Endothelial cell of umbilical vein (primary cell): ENCODE measurements at regions of chr3 and their contacts with region 1.

Region 1: GRCh38 chr3:155323063-155323666 is 29.7 kb upstream of the STRIT1 start:
- DNase-seq: peak; percentile 86
- H3K4me3 ChIP-seq: no peak overlapping the region
- H3K27ac ChIP-seq: no peak overlapping the region
- H3K4me1 ChIP-seq: no peaks in the 10 kb centered on the region
- H3K27me3 ChIP-seq: no peaks in the 10 kb centered on the region
- CTCF ChIP-seq: peak; percentile 55 to 67
- POLR2A ChIP-seq: no peak

Region 2: DNA sequence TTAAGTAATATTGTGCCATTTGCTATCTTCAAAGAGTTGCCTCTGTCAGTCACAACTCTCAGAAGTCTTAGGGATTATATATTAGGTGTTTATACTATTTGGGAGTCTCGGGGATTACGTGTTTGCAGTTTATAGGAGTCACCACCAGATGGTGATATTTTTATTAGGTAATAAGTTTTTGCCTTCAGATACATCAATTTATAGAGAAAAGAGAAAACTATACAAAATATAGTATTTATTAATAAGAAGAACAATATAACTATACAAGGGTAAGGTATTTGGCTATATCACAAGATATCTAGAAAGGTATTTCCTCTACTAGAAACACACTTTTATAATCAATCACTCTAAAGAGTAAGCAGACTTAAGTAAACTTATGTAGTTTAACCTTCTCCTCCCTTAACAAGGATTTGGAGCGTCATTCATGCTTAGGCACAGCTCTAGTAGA is 988.2 kb before region 1 on chr3:
- CTCF ChIA-PET with region 1: interaction called, 27 read pairs
- POLR2A ChIA-PET with region 1: no interaction called
- dilution Hi-C with region 1: no loop called
- intact Hi-C with region 1: loop called (anchors 1 kb)
- DNase-seq: peak; percentile 63
- H3K4me3 ChIP-seq: no peak overlapping the region
- H3K27ac ChIP-seq: no peak overlapping the region
- H3K4me1 ChIP-seq: no peaks in the 10 kb centered on the region
- H3K27me3 ChIP-seq: peaks cover 7 to 27% of the 10 kb centered on the region in 2 experiments
- CTCF ChIP-seq: peak; percentile 19 to 22
- POLR2A ChIP-seq: no peak

Region 3: DNA sequence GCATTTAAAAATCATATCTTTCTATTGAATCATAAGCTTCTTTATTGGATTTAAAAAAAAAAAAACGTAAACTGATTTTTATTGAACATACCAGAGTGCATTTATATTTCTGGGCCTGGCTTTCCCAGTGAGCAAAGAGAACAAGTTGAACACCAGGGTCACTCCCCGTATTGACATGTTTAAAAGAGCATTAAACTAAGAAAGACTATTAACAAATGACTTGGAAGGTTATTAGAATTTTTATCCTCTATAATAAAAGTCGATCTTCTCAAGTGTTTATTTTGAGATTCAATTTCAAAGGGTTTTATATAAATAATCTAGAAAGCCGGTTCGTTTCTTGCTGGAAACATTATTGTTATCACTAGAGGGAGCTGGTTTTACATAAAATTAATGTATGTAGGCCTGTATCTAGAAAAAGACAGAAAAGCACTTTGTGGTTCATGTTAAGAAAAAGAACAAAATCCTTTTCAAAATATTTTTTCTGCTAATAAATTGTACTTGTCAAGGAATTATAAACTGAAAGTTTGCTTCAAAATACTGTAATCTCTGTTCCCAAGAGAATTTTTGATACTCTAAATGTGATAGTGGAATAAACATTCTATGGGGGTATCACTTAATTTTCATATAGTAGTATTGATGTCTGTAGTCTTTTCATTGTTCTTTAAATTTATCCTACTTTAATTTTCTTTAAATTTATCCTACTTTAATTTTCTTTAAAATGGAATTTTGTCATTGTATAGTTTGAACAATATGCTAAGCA is 564.9 kb before region 1 on chr3:
- CTCF ChIA-PET with region 1: interaction called, 22 read pairs
- POLR2A ChIA-PET with region 1: no interaction called
- dilution Hi-C with region 1: no loop called
- intact Hi-C with region 1: loop called (anchors 1 kb)
- DNase-seq: peak; percentile 11
- H3K4me3 ChIP-seq: no peak overlapping the region
- H3K27ac ChIP-seq: no peak overlapping the region
- H3K4me1 ChIP-seq: no peaks in the 10 kb centered on the region
- H3K27me3 ChIP-seq: no peaks in the 10 kb centered on the region
- CTCF ChIP-seq: no peak
- POLR2A ChIP-seq: no peak

Region 4: GRCh38 chr3:154904328-154904727 is 418.8 kb before region 1 on chr3:
- CTCF ChIA-PET with region 1: interaction called, 115 read pairs
- POLR2A ChIA-PET with region 1: no interaction called
- dilution Hi-C with region 1: no loop called
- intact Hi-C with region 1: loop called (anchors 1 kb)
- DNase-seq: peak; percentile 34
- H3K4me3 ChIP-seq: no peak overlapping the region
- H3K27ac ChIP-seq: no peak overlapping the region
- H3K4me1 ChIP-seq: no peaks in the 10 kb centered on the region
- H3K27me3 ChIP-seq: peaks cover 0 to 1% of the 10 kb centered on the region in 2 experiments
- CTCF ChIP-seq: peak in 1 of 2 donors; percentile 34
- POLR2A ChIP-seq: no peak

Region 5: DNA sequence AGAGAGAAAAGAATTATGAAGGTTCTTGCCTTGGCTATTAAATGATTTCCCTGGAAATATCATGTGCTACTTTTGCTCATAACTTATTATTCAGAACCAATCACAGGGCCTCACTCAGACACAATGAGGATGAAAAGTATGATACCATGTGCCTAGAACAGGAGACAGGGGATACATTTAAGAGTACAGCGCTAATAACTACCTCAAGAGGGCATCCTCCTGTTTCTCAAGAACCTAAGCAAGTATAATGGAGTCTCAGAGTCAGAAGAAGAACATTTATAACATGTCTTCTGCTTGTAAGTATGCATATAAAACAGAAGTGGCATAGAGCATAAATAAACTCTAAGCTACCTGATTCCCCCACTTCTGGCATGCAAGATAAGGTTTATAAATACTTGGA is 368.4 kb before region 1 on chr3:
- CTCF ChIA-PET with region 1: interaction called, 68 read pairs
- POLR2A ChIA-PET with region 1: no interaction called
- dilution Hi-C with region 1: no loop called
- intact Hi-C with region 1: loop called (anchors 1 kb)
- DNase-seq: peak; percentile 53
- H3K4me3 ChIP-seq: no peak overlapping the region
- H3K27ac ChIP-seq: no peak overlapping the region
- H3K4me1 ChIP-seq: no peaks in the 10 kb centered on the region
- H3K27me3 ChIP-seq: no peaks in the 10 kb centered on the region
- CTCF ChIP-seq: peak; percentile 18 to 50
- POLR2A ChIP-seq: no peak